CD4-positive, alpha-beta memory T cell (primary cell): ENCODE measurements at regions of chr3 and their contacts with region 1.

Region 1: GRCh38 chr3:122679085-122679881 is 1.4 kb upstream of the PARP14 start:
- DNase-seq: peak; percentile 79 to 86 (median 79)
- H3K4me3 ChIP-seq: peak overlapping the region; percentile 81 to 89
- H3K4me3 Mint-ChIP-seq: peak overlapping the region; percentile 84 to 98 (median 96)
- H3K27ac ChIP-seq: peak overlapping the region; percentile 96
- H3K27ac Mint-ChIP-seq: peak overlapping the region; percentile 85 to 98 (median 97)
- H3K4me1 ChIP-seq: peaks cover 45% of the 10 kb centered on the region
- H3K4me1 Mint-ChIP-seq: peaks cover 38 to 61% (median 51%) of the 10 kb centered on the region in 4 donors
- H3K27me3 ChIP-seq: no peaks in the 10 kb centered on the region
- H3K27me3 Mint-ChIP-seq: no peaks in the 10 kb centered on the region

Region 2: DNA sequence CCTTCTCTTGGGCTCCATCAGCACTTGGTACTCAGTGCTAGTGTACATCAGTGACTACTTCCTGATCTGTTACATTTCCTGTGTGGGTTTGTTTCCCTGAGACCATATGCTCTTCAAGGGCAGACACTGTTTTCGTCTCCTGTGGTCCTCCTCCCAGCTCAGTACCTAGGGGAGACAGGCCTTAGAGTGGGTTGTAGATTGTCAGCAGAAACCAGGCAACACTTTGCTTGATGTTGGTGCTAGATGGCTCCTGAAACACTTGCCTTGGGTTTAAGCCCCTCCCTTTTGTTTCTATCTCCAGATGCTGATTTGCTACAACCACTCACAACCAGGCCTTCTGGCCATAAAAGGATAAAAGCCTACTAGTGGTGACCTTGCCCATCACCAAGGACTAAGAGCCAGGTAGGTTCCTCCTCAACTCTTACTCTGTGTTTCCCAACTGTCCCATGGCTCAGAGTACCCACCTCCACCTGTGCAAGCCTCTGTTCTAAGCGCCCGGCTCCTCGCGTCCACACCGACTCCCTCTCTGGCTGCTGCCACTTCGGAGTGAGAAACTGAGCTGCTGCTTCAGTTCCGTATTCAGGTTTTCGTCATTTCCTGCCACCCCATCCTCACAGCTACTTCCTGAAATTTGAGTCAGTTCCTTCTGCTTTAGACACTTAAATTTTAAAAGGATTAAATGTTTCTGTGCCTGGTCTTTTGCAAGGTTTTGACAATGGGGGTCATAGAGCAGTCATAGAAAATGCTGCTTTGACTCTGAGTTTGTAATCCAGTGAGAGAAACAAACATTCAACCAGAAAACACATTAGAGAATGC is 1018.7 kb before region 1 on chr3 and contains the start of gene HCLS1:
- CTCF ChIA-PET with region 1: interaction called, 3 read pairs
- POLR2A ChIA-PET with region 1: no interaction called
- intact Hi-C with region 1: loop called (anchors 2 kb)
- DNase-seq: peak; percentile 80 to 86 (median 83)
- H3K4me3 ChIP-seq: peak within 1 kb of the TSS; percentile 58 to 76
- H3K4me3 Mint-ChIP-seq: peak within 1 kb of the TSS; percentile 91 to 99 (median 94)
- H3K27ac ChIP-seq: peak within 1 kb of the TSS; percentile 85
- H3K27ac Mint-ChIP-seq: peak within 1 kb of the TSS; percentile 95 to 100 (median 99)
- H3K4me1 ChIP-seq: peaks cover 42% of the 10 kb centered on the region
- H3K4me1 Mint-ChIP-seq: peaks cover 36 to 62% (median 50%) of the 10 kb centered on the region in 4 donors
- H3K27me3 ChIP-seq: no peaks in the 10 kb centered on the region
- H3K27me3 Mint-ChIP-seq: no peaks in the 10 kb centered on the region
- total RNA-seq, gene HCLS1: 336 TPM

Region 3: DNA sequence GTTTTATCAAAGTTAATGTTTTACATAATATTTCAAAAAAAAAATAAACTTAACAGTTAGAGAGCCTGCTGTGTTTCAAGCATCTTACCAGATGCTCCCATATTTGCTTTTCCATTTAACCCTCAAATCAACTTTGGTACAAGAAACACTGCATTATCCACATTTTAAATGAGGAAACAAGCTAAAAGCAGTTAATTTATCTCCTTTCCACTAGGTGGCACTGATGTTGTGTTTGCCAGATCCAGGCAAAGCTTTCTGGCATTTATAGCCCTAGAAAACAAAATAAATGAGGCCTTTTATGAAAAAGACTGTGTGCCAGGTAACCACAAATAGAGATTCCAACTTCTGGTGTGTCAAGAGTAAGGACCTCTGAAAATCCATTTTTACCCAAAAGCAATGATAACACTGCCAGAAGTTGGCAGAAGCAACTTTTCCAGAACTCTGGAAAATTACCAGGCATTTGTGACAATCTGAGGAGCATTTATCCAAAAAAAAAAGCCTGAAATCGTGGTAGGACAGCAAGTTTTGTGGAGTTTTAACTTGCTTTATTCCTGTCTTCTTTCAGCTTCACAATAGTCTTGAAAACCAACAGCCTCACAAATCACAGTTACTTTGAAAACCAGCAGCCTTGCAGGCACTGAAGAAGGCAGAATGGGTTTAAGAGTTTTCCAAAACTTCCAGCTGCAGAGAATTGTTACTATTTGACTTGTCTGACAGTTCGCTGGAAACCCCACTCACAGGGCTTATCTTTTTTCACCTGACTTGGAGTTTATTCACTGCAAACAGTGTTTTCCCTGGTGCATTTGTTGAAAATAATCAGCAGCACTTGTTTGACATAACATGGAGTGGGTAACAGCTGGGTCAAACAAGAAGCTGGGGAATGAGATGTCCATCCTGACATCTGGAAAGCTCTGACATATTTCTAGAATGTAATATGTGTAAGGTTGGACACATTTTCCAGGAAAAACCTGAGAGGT is 286.1 kb before region 1 on chr3:
- CTCF ChIA-PET with region 1: interaction called, 28 read pairs
- POLR2A ChIA-PET with region 1: interaction called, 9 read pairs
- intact Hi-C with region 1: loop called (anchors 1 kb)
- DNase-seq: peak; percentile 40 to 55 (median 47)
- H3K4me3 ChIP-seq: no peak overlapping the region
- H3K4me3 Mint-ChIP-seq: no peak overlapping the region
- H3K27ac ChIP-seq: no peak overlapping the region
- H3K27ac Mint-ChIP-seq: peak overlapping the region in 1 of 7 donors; percentile 48
- H3K4me1 ChIP-seq: no peaks in the 10 kb centered on the region
- H3K4me1 Mint-ChIP-seq: peaks cover 4 to 7% (median 5%) of the 10 kb centered on the region in 4 donors
- H3K27me3 ChIP-seq: no peaks in the 10 kb centered on the region
- H3K27me3 Mint-ChIP-seq: no peaks in the 10 kb centered on the region

Region 4: DNA sequence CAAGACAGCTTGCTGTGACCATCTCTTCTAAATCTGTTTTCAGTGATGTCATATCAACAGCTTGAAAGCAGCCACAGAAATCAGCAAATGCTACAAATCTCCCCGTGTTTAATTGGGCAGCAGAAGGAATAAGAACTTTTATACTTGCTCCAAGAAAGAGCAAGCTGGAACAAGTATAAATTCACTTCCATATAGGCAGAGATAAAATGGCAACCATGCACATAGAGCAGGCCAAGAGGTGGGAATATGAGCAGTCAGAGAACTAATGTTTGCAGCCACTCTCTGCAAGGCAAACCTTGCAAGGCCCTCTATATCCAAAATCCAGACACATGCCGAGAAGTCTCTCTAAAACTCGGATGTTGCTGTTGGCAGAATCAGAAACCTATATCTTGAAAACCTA is 131.2 kb before region 1 on chr3:
- CTCF ChIA-PET with region 1: interaction called, 13 read pairs
- POLR2A ChIA-PET with region 1: no interaction called
- intact Hi-C with region 1: no loop called
- DNase-seq: no peak
- H3K4me3 ChIP-seq: no peak overlapping the region
- H3K4me3 Mint-ChIP-seq: no peak overlapping the region
- H3K27ac ChIP-seq: no peak overlapping the region
- H3K27ac Mint-ChIP-seq: no peak overlapping the region
- H3K4me1 ChIP-seq: no peaks in the 10 kb centered on the region
- H3K4me1 Mint-ChIP-seq: peaks cover under 1 to 9% (median 5%) of the 10 kb centered on the region in 4 donors
- H3K27me3 ChIP-seq: no peaks in the 10 kb centered on the region
- H3K27me3 Mint-ChIP-seq: no peaks in the 10 kb centered on the region

Region 5: GRCh38 chr3:122572940-122573412 is 106.3 kb before region 1 on chr3:
- CTCF ChIA-PET with region 1: interaction called, 369 read pairs
- POLR2A ChIA-PET with region 1: interaction called, 13 read pairs
- intact Hi-C with region 1: loop called (anchors 1 kb)
- DNase-seq: peak in 2 of 5 donors; percentile 19 to 51
- H3K4me3 ChIP-seq: no peak overlapping the region
- H3K4me3 Mint-ChIP-seq: peak overlapping the region in 1 of 8 donors; percentile 52
- H3K27ac ChIP-seq: no peak overlapping the region
- H3K27ac Mint-ChIP-seq: peak overlapping the region; percentile 1 to 91 (median 76)
- H3K4me1 ChIP-seq: peaks cover 56% of the 10 kb centered on the region
- H3K4me1 Mint-ChIP-seq: peaks cover 50 to 81% (median 60%) of the 10 kb centered on the region in 4 donors
- H3K27me3 ChIP-seq: no peaks in the 10 kb centered on the region
- H3K27me3 Mint-ChIP-seq: no peaks in the 10 kb centered on the region

Region 6: GRCh38 chr3:122646146-122646988 is 32.9 kb before region 1 on chr3:
- CTCF ChIA-PET with region 1: interaction called, 24 read pairs
- POLR2A ChIA-PET with region 1: interaction called, 28 read pairs
- intact Hi-C with region 1: loop called (anchors 2 kb)
- DNase-seq: peak in 1 of 5 donors; percentile 40
- H3K4me3 ChIP-seq: no peak overlapping the region
- H3K4me3 Mint-ChIP-seq: peak overlapping the region in 3 of 8 donors; percentile 81 to 85 (median 84)
- H3K27ac ChIP-seq: peak overlapping the region; percentile 62
- H3K27ac Mint-ChIP-seq: peak overlapping the region in 4 of 7 donors; percentile 0 to 97 (median 90)
- H3K4me1 ChIP-seq: no peaks in the 10 kb centered on the region
- H3K4me1 Mint-ChIP-seq: peaks cover 5 to 41% (median 12%) of the 10 kb centered on the region in 4 donors
- H3K27me3 ChIP-seq: no peaks in the 10 kb centered on the region
- H3K27me3 Mint-ChIP-seq: no peaks in the 10 kb centered on the region

Region 7: GRCh38 chr3:122694966-122695365 is 15.7 kb after region 1 on chr3:
- CTCF ChIA-PET with region 1: interaction called, 11 read pairs
- POLR2A ChIA-PET with region 1: interaction called, 4 read pairs
- intact Hi-C with region 1: no loop called
- DNase-seq: no peak
- H3K4me3 ChIP-seq: no peak overlapping the region
- H3K4me3 Mint-ChIP-seq: no peak overlapping the region
- H3K27ac ChIP-seq: no peak overlapping the region
- H3K27ac Mint-ChIP-seq: peak overlapping the region in 2 of 7 donors; percentile 72 to 82
- H3K4me1 ChIP-seq: no peaks in the 10 kb centered on the region
- H3K4me1 Mint-ChIP-seq: peaks cover 8 to 14% (median 10%) of the 10 kb centered on the region in 4 donors
- H3K27me3 ChIP-seq: no peaks in the 10 kb centered on the region
- H3K27me3 Mint-ChIP-seq: no peaks in the 10 kb centered on the region

Region 8: GRCh38 chr3:122982216-122983185 is 303.2 kb after region 1 on chr3:
- CTCF ChIA-PET with region 1: no interaction called
- POLR2A ChIA-PET with region 1: no interaction called
- intact Hi-C with region 1: no loop called
- DNase-seq: no peak
- H3K4me3 ChIP-seq: no peak overlapping the region
- H3K4me3 Mint-ChIP-seq: no peak overlapping the region
- H3K27ac ChIP-seq: no peak overlapping the region
- H3K27ac Mint-ChIP-seq: peak overlapping the region in 1 of 7 donors; percentile 19
- H3K4me1 ChIP-seq: no peaks in the 10 kb centered on the region
- H3K4me1 Mint-ChIP-seq: no peaks in the 10 kb centered on the region
- H3K27me3 ChIP-seq: no peaks in the 10 kb centered on the region
- H3K27me3 Mint-ChIP-seq: peaks cover 3 to 13% of the 10 kb centered on the region in 2 donors